Tibial artery (tissue), 4 donors: ENCODE measurements at regions of chr11 and their contacts with region 1.

Region 1: GRCh38 chr11:101860696-101861427 is 53.9 kb upstream of the CEP126 start:
- DNase-seq: peak in 1 of 2 donors; percentile 26
- H3K4me3 ChIP-seq: no peak overlapping the region
- H3K27ac ChIP-seq: no peak overlapping the region
- H3K4me1 ChIP-seq: peaks cover 0 to 15% (median 5%) of the 10 kb centered on the region in 4 donors
- H3K27me3 ChIP-seq: no peaks in the 10 kb centered on the region
- CTCF ChIP-seq: peak; percentile 68 to 76

Region 2: DNA sequence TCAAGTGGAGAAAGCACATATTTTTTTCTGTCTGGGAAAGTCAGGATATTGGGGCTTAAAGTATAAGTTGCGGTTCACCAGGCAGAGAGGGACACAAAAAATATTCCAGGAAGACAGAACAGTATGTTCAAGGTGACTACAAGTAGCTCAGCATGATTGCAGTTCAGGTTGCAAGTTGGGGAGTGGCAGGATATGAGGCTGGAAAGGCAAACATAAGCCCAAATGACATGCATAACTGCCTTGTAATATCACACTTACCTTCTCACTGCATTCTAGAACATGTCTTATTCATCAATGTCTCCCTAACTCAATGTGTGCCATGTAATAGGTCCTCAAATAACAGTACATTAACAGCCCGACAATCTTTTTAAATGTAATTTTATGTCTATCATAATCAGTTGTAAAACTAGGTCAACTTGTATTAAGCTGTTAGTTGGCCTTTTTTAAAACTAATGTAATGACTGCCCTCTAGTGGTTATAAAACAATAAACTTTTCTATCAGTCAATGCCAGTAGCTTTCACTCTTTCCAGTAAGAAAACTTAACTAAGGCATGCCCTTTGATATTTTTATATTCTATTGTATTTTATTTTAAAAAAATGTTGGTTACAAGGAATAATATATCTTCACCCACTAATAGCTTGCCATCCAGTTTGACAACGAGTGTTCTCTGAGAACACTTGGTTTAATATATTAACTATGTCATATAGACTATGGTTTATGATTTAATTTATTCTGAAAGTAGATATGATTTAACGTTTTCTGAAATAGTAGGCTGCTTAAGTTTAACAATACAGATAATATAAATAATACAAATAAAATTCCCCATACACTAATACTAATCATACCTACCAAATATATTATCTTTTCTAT is 146.9 kb after region 1 on chr11:
- intact Hi-C with region 1: loop called (anchors 5 kb)
- DNase-seq: no peak
- H3K4me3 ChIP-seq: no peak overlapping the region
- H3K27ac ChIP-seq: peak overlapping the region in 1 of 2 donors; percentile 29
- H3K4me1 ChIP-seq: peaks cover 0 to 21% (median 7%) of the 10 kb centered on the region in 4 donors
- H3K27me3 ChIP-seq: no peaks in the 10 kb centered on the region
- CTCF ChIP-seq: peak; percentile 43 to 60